ENCODE measurements at regions of chr9 and their contacts with region 1.

Region 1: DNA sequence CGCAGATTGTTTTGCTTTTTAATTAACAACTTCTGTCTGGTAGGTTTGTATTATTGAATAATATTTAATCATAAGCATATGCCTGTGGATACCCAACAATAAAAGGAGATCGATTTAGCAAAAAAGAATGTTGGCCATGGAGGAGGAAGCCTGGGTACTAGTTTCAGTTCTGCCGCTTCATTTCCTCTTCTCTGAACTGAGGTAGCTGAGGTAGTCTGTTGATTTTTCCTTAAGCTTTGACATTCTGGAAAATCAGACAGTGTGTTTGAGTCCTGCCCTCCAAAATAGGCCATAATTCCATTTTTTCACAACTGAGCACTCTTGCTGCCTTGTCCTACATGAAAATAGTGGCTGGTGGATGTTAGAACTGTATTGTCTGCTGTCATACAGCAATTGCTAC is 6.0 kb upstream of the GPR21 start:
- DNase-seq: no peak
- ATAC-seq: no peak
- H3K4me3 ChIP-seq: no peak overlapping the region
- H3K27ac ChIP-seq: no peak overlapping the region
- H3K4me1 ChIP-seq: peaks cover 9 to 18% of the 10 kb centered on the region in 2 donors
- H3K27me3 ChIP-seq: no peaks in the 10 kb centered on the region
- CTCF ChIP-seq: no peak
- POLR2A ChIP-seq: no peak

Region 2: GRCh38 chr9:123093141-123093540 is 65.6 kb after region 1 on chr9:
- in situ Hi-C with region 1: no loop called
- intact Hi-C with region 1: loop called (anchors 2 kb)
- DNase-seq: no peak
- ATAC-seq: no peak
- H3K4me3 ChIP-seq: no peak overlapping the region
- H3K27ac ChIP-seq: no peak overlapping the region
- H3K4me1 ChIP-seq: no peaks in the 10 kb centered on the region
- H3K27me3 ChIP-seq: no peaks in the 10 kb centered on the region
- CTCF ChIP-seq: no peak
- POLR2A ChIP-seq: no peak